ENCODE measurements at regions of chr1 and their contacts with region 1.

Region 1: GRCh38 chr1:51690285-51690961 is 73.5 kb downstream of the OSBPL9 start:
- DNase-seq: peak; percentile 99
- ATAC-seq: peak; percentile 97
- H3K4me3 ChIP-seq: peak overlapping the region in 1 of 3 experiments; percentile 35; a peak in 1 of 6 replicates
- H3K27ac ChIP-seq: peak overlapping the region; percentile 99
- H3K4me1 ChIP-seq: peaks cover 85% of the 10 kb centered on the region
- H3K27me3 ChIP-seq: no peaks in the 10 kb centered on the region
- CTCF ChIP-seq: no peak
- EP300 ChIP-seq: peak; percentile 83 to 98
- POLR2A ChIP-seq: no peak
- RAD21 ChIP-seq: no peak; the same call in 1 of the 2 replicates

Region 2: GRCh38 chr1:51622455-51622913 is 67.9 kb before region 1 on chr1:
- CTCF ChIA-PET with region 1: no interaction called
- POLR2A ChIA-PET with region 1: interaction called, 10 read pairs
- in situ Hi-C with region 1: no loop called
- intact Hi-C with region 1: no loop called
- DNase-seq: peak; percentile 66
- ATAC-seq: peak; percentile 74
- H3K4me3 ChIP-seq: no peak overlapping the region
- H3K27ac ChIP-seq: no peak overlapping the region
- H3K4me1 ChIP-seq: peaks cover 59% of the 10 kb centered on the region
- H3K27me3 ChIP-seq: no peaks in the 10 kb centered on the region; a peak in 1 of 5 replicates
- CTCF ChIP-seq: no peak
- EP300 ChIP-seq: 0 out of 4 replicates have a peak, but pooled peaks of 1 of the 2 experiments have one; percentile 11
- POLR2A ChIP-seq: no peak
- RAD21 ChIP-seq: no peak

Region 3: GRCh38 chr1:51648180-51649109 is 42.0 kb before region 1 on chr1:
- CTCF ChIA-PET with region 1: no interaction called
- POLR2A ChIA-PET with region 1: interaction called, 5 read pairs
- in situ Hi-C with region 1: no loop called
- intact Hi-C with region 1: loop called (anchors 2 kb)
- DNase-seq: peak; percentile 66
- ATAC-seq: peak; percentile 89
- H3K4me3 ChIP-seq: peak overlapping the region in 2 of 3 experiments; percentile 17 to 29; a peak in 1 of 6 replicates
- H3K27ac ChIP-seq: peak overlapping the region; percentile 28
- H3K4me1 ChIP-seq: peaks cover 57% of the 10 kb centered on the region
- H3K27me3 ChIP-seq: no peaks in the 10 kb centered on the region
- CTCF ChIP-seq: no peak
- EP300 ChIP-seq: no peak
- POLR2A ChIP-seq: no peak
- RAD21 ChIP-seq: no peak

Region 4: DNA sequence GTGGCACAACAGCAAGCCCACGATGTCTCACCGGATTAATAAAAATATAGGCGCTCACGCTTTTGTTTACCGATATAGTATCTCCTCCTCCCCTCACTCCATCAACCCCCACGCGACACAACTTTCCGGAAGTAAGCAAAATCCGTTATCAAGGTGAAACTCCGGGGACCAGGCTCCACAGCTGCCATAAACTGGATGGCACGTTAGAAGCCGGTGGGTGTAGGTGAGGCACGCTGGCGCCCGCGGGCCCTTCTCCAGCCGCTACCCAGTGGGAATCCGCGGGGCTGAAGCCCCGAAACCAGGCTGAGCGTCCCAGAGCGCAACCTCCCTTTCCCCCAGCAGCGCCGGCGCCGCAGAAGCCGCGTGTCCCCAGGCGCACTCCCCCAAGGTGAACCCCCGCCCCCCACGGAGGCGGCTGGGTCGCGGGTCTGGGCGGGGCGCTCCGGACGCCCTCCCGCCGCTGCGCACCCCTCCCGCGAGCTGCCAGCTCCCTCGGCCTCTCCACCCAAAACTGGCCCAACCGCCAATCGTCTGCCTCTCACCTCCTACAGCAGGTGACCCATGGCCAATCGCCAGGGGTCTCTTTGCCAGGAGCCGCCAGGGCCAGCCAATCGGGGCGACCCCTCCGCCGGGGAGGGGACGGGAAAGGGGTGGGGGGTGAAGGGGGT is 38.9 kb after region 1 on chr1:
- CTCF ChIA-PET with region 1: no interaction called
- POLR2A ChIA-PET with region 1: interaction called, 24 read pairs
- in situ Hi-C with region 1: loop called (anchors 5 kb)
- intact Hi-C with region 1: loop called (anchors 1 kb)
- DNase-seq: peak; percentile 95
- ATAC-seq: peak; percentile 97
- H3K4me3 ChIP-seq: peak overlapping the region; percentile 85 to 89 (median 87)
- H3K27ac ChIP-seq: peak overlapping the region; percentile 88
- H3K4me1 ChIP-seq: peaks cover 52% of the 10 kb centered on the region
- H3K27me3 ChIP-seq: no peaks in the 10 kb centered on the region; a peak in 1 of 5 replicates
- CTCF ChIP-seq: no peak
- EP300 ChIP-seq: 0 out of 4 replicates have a peak, but pooled peaks of 1 of the 2 experiments have one; percentile 18
- POLR2A ChIP-seq: peak; percentile 48 to 54; a peak in 3 of 4 replicates
- RAD21 ChIP-seq: peak; percentile 13; the same call in 1 of the 2 replicates